ENCODE measurements at regions of chr11 and their contacts with region 1.

Region 1: DNA sequence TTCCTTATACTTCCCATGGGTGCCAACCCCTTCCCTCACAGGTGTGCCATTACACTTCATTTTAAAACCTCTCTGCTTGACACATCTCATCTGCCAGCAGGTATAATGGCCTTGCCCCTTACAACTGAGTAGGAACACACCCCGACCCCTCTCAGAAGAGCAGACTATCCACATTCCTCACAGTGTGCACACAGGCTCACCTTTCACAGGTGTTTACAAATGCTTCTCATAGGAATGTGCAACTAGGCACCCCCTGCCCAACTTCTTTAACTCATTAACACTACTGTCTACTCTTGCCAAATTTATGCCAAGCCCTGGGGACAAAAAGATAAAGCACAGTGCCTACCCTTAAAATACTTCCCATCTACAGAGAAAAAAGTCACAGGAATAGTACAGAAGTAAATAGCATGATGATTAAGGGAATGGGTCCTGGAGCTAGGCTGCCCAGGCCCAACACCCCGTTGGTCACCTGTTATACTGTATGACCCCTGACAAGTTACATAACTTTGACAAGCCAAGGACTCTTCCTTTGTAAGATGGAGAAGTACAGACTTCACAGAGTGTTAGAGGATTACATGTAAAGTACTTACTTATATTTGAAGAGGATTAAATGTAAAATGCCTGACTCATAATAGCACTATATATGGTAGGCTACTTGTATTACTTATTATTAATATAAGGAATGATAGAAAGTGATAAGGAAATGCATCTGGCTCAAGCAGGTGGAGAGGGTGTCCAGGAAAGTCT is 15.2 kb downstream of the TRIM3 start:
- DNase-seq: peak; percentile 79 to 84
- H3K4me3 ChIP-seq: no peak overlapping the region
- H3K4me3 Mint-ChIP-seq: peak overlapping the region; percentile 48
- H3K27ac Mint-ChIP-seq: no peak overlapping the region
- H3K4me1 ChIP-seq: peaks cover 33% of the 10 kb centered on the region
- H3K4me1 Mint-ChIP-seq: peaks cover 11% of the 10 kb centered on the region
- H3K27me3 ChIP-seq: no peaks in the 10 kb centered on the region
- H3K27me3 Mint-ChIP-seq: no peaks in the 10 kb centered on the region
- CTCF ChIP-seq: no peak

Region 2: GRCh38 chr11:6345366-6345765 is 113.2 kb before region 1 on chr11:
- CTCF ChIA-PET with region 1: no interaction called
- POLR2A ChIA-PET with region 1: no interaction called
- intact Hi-C with region 1: no loop called
- DNase-seq: no peak
- H3K4me3 ChIP-seq: no peak overlapping the region
- H3K4me3 Mint-ChIP-seq: no peak overlapping the region
- H3K27ac Mint-ChIP-seq: no peak overlapping the region
- H3K4me1 ChIP-seq: no peaks in the 10 kb centered on the region
- H3K4me1 Mint-ChIP-seq: peaks cover 7% of the 10 kb centered on the region
- H3K27me3 ChIP-seq: no peaks in the 10 kb centered on the region
- H3K27me3 Mint-ChIP-seq: no peaks in the 10 kb centered on the region
- CTCF ChIP-seq: no peak

Region 3: GRCh38 chr11:6473481-6474422 is 15.2 kb after region 1 on chr11 and contains the start of gene TRIM3:
- CTCF ChIA-PET with region 1: interaction called, 3 read pairs
- POLR2A ChIA-PET with region 1: interaction called, 3 read pairs
- intact Hi-C with region 1: loop called (anchors 1 kb)
- DNase-seq: peak; percentile 92 to 94
- H3K4me3 ChIP-seq: peak within 1 kb of the TSS; percentile 65
- H3K4me3 Mint-ChIP-seq: peak within 1 kb of the TSS; percentile 84
- H3K27ac Mint-ChIP-seq: peak within 1 kb of the TSS; percentile 96
- H3K4me1 ChIP-seq: peaks cover 30% of the 10 kb centered on the region
- H3K4me1 Mint-ChIP-seq: peaks cover 29% of the 10 kb centered on the region
- H3K27me3 ChIP-seq: no peaks in the 10 kb centered on the region
- H3K27me3 Mint-ChIP-seq: no peaks in the 10 kb centered on the region
- CTCF ChIP-seq: peak in 1 of 2 experiments; percentile 39
- total RNA-seq, gene TRIM3: 28.0 and 33.4 TPM in 2 replicates

Region 4: DNA sequence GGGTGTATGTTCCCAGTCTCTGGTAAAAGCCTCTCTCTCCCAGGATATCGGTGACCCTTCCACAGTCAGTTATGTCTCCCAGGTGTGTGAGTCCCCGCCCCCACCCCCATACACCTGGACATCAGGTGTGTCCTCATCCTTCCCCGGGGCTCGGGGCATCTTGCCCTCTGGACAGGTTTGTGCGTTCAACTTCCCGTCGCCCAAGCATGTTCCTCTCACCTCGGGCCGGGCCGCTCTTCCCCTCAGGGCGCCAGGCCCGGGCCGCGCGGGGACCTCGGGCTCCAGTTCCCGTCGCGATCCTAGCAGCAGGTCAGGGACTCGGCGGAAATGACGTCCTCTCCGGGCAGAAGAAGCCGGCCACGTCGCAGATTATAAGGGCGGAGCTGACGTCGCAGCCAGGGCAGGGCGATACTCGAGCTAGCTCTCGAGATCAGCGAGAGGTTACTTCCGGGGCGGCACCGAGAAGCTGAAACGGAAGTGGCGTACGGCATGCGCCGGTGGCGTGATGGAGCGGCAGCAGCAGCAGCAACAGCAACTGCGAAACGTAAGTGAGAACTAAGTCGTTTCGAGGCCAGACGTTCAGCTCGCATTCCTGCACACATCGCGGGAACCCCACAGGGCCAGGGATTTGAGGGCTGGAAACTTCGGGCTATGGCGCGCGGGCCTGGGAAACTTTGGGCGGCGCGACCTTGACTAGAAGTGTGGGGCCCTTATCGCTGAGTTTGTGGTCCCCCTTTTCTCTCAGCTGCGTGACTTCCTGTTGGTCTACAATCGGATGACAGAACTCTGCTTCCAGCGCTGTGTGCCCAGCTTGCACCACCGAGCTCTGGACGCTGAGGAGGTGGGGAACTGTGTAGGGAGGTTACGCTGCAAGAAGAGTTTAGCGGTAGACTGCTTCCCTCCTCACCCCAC is 22.7 kb after region 1 on chr11 and contains the starts of genes ARFIP2 and TIMM10B:
- CTCF ChIA-PET with region 1: no interaction called
- POLR2A ChIA-PET with region 1: interaction called, 13 read pairs
- intact Hi-C with region 1: loop called (anchors 1 kb)
- DNase-seq: peak; percentile 97 to 98
- H3K4me3 ChIP-seq: peak within 1 kb of the TSS; percentile 88
- H3K4me3 Mint-ChIP-seq: peak within 1 kb of the TSS; percentile 97
- H3K27ac Mint-ChIP-seq: peak within 1 kb of the TSS; percentile 99
- H3K4me1 ChIP-seq: peaks cover 42% of the 10 kb centered on the region
- H3K4me1 Mint-ChIP-seq: peaks cover 23% of the 10 kb centered on the region
- H3K27me3 ChIP-seq: no peaks in the 10 kb centered on the region
- H3K27me3 Mint-ChIP-seq: no peaks in the 10 kb centered on the region
- CTCF ChIP-seq: no peak
- total RNA-seq, gene ARFIP2: 94.6 and 100 TPM in 2 replicates
- total RNA-seq, gene TIMM10B: 52.4 and 53.1 TPM in 2 replicates

Region 5: GRCh38 chr11:6489306-6489705 is 30.8 kb after region 1 on chr11:
- CTCF ChIA-PET with region 1: no interaction called
- POLR2A ChIA-PET with region 1: no interaction called
- intact Hi-C with region 1: loop called (anchors 1 kb)
- DNase-seq: peak in 1 of 2 experiments; percentile 36
- H3K4me3 ChIP-seq: no peak overlapping the region
- H3K4me3 Mint-ChIP-seq: peak overlapping the region; percentile 35
- H3K27ac Mint-ChIP-seq: peak overlapping the region; percentile 29
- H3K4me1 ChIP-seq: peaks cover 62% of the 10 kb centered on the region
- H3K4me1 Mint-ChIP-seq: peaks cover 6% of the 10 kb centered on the region
- H3K27me3 ChIP-seq: no peaks in the 10 kb centered on the region
- H3K27me3 Mint-ChIP-seq: no peaks in the 10 kb centered on the region
- CTCF ChIP-seq: no peak

Region 6: GRCh38 chr11:6576471-6577373 is 118.2 kb after region 1 on chr11:
- CTCF ChIA-PET with region 1: no interaction called
- POLR2A ChIA-PET with region 1: no interaction called
- intact Hi-C with region 1: no loop called
- DNase-seq: no peak
- H3K4me3 ChIP-seq: no peak overlapping the region
- H3K4me3 Mint-ChIP-seq: no peak overlapping the region
- H3K27ac Mint-ChIP-seq: no peak overlapping the region
- H3K4me1 ChIP-seq: no peaks in the 10 kb centered on the region
- H3K4me1 Mint-ChIP-seq: no peaks in the 10 kb centered on the region
- H3K27me3 ChIP-seq: no peaks in the 10 kb centered on the region
- H3K27me3 Mint-ChIP-seq: no peaks in the 10 kb centered on the region
- CTCF ChIP-seq: no peak